HEK293T (cell line): ENCODE measurements at regions of chr10 and their contacts with region 1.

Region 1: GRCh38 chr10:32980558-32981468 is 22.8 kb upstream of the ITGB1 start:
- DNase-seq: peak; percentile 67

Region 2: DNA sequence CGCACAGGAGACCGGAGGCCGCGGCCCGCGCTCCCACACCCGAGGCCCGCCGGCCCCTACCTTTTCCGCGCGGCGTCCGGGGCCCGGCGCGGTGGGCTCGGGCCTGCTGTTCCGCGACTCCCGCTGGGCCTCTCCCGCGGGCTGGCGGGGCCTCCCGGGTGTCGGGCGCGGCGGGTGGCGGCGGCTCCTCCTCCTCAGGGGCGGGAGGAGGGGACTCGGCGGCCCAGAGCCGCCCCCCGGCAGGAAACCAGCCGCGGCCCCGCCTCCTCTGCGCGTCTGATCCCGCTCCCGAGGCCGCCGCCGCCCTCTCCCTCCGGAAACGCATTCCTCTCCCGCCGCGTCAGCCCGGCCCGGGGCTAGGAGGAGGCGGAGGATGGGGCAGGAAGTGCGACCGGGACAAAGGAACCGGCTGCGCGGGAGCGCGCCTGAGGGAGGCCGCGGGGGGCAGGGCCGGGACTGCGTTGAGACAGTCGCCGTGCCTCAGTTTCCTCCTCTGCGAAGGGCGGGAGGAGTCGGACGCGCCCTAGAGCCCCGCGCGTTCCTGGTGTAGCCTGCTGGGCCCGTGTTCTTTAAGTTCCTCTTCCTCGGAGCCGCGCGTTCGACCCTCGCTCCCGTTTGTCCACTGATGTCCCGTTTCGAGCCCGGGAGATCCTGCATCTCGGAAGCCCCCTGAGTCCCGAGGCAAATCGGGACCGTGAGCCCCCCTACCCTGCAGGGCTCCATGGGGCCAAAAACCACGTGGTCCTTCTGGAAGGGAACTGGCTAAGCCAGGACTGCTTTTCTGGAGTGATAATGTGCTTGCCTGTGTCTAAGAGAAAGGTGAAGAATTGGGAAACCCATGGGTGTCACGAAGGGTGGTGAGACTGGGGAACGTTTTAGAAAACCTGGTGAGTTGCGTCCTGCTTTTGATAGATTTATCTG is 22.5 kb before region 1 on chr10 and contains the start of gene ITGB1:
- CTCF ChIA-PET with region 1: interaction called, 5 read pairs
- POLR2A ChIA-PET with region 1: interaction called, 15 read pairs
- DNase-seq: peak; percentile 76

Region 3: GRCh38 chr10:33005322-33006301 is 24.8 kb after region 1 on chr10:
- CTCF ChIA-PET with region 1: interaction called, 3 read pairs
- POLR2A ChIA-PET with region 1: interaction called, 10 read pairs
- DNase-seq: peak; percentile 62